ENCODE measurements at regions of chr6 and their contacts with region 1.

Region 1: DNA sequence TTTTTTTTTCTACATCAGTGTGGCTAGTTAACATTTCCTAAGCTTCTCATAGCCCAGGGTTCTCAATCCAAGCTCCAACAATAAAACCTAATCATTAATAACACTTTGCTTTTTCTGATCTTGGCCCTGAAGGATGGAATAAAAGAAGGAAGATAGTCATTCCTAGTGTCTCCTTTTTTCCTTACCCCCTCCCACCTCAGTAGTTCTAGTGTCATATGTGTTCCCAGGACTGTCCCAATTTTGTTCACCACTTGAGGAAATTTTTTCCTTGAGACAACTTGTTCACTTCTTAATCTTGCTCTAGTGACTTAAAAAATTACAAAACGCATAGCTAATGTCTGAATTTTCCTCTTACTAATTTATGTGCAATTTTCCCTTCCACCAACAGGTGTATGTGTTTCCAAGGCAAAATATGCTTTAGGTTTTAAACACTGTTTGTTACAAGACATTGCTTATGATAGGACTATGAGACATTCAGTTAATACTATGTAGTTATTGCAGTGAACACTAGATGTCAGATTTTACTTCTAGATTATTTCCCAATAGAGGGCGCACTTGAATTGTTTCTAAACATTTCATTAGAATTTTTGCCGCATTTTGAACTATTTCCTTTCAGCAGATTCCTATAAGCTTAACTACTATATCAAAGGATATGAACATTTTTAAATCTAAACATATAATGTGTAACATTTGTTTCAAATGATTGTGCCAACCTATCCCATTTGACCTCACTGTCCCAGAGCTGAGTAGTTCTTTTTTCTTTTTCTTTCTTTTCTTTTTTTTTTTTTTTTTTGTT is 18.5 kb upstream of the C6orf141 start:
- DNase-seq: no peak
- ATAC-seq: peak; percentile 47
- H3K4me3 Mint-ChIP-seq: peak overlapping the region; percentile 35
- H3K27ac Mint-ChIP-seq: no peak overlapping the region
- H3K4me1 Mint-ChIP-seq: peaks cover 3% of the 10 kb centered on the region
- H3K27me3 Mint-ChIP-seq: peaks cover 4% of the 10 kb centered on the region
- CTCF ChIP-seq: peak; percentile 33

Region 2: GRCh38 chr6:49606696-49607390 is 74.9 kb after region 1 on chr6:
- CTCF ChIA-PET with region 1: no interaction called
- POLR2A ChIA-PET with region 1: no interaction called
- intact Hi-C with region 1: loop called (anchors 1 kb)
- DNase-seq: no peak
- ATAC-seq: peak; percentile 34
- H3K4me3 Mint-ChIP-seq: no peak overlapping the region
- H3K27ac Mint-ChIP-seq: no peak overlapping the region
- H3K4me1 Mint-ChIP-seq: no peaks in the 10 kb centered on the region
- H3K27me3 Mint-ChIP-seq: peaks cover 3% of the 10 kb centered on the region
- CTCF ChIP-seq: no peak

Region 3: GRCh38 chr6:49849213-49849907 is 317.4 kb after region 1 on chr6:
- CTCF ChIA-PET with region 1: interaction called, 4 read pairs
- POLR2A ChIA-PET with region 1: no interaction called
- intact Hi-C with region 1: loop called (anchors 1 kb)
- DNase-seq: no peak
- ATAC-seq: no peak
- H3K4me3 Mint-ChIP-seq: no peak overlapping the region
- H3K27ac Mint-ChIP-seq: no peak overlapping the region
- H3K4me1 Mint-ChIP-seq: no peaks in the 10 kb centered on the region
- H3K27me3 Mint-ChIP-seq: no peaks in the 10 kb centered on the region
- CTCF ChIP-seq: no peak

Measured in activated B cell treated with CpG ODN at 0.5 μM for 24 hours (primary cell).